Mammary epithelial cell (primary cell): ENCODE measurements at regions of chr20 and their contacts with region 1.

Region 1: DNA sequence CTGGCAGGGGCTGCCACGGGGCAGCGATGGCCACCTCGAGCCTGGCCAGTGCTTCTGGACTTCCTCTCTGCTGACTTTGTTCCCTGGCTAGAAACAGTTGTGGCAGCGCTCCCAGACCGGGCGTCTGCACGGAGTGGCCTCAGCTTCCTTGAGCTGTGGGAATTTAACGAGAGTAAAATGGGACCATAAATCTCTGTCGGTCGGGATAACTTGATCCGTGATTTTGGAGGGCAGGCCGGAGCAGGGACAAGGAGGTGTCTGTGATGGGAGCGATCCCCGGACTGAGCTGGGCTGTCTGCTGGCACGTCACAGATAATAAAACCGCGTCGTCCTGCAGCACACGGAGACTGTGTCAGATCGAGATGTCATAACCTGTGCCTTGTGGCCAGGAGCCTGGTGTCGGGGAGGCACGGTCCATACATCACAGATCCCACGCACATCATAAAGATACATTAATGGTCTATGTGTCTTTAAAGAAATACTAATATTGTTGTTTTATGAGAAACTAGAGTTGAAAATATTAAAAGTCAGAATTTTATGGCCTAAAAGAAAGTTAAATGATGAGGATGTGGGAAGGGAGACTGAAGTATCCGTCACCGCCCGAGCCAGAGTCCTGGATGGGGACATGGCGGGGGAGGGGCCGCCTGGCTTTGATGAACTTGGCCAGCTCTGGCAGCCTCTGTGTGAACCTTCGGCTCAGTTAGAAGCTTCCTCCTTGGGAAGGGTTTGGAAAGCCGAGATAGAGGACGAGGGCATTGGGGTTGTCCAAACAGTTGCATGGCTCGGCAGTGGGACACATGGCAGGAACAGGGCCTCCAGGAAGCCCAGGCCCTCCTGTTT is 6.5 kb upstream of the RBBP8NL start:
- DNase-seq: no peak
- H3K4me3 ChIP-seq: no peak overlapping the region
- H3K27ac ChIP-seq: no peak overlapping the region
- H3K4me1 ChIP-seq: no peaks in the 10 kb centered on the region
- H3K27me3 ChIP-seq: no peaks in the 10 kb centered on the region
- CTCF ChIP-seq: no peak

Region 2: GRCh38 chr20:62292108-62292507 is 141.8 kb before region 1 on chr20:
- CTCF ChIA-PET with region 1: no interaction called
- dilution Hi-C with region 1: loop called (anchors 5 kb)
- in situ Hi-C with region 1: no loop called
- intact Hi-C with region 1: no loop called
- DNase-seq: no peak
- H3K4me3 ChIP-seq: no peak overlapping the region
- H3K27ac ChIP-seq: no peak overlapping the region
- H3K4me1 ChIP-seq: no peaks in the 10 kb centered on the region
- H3K27me3 ChIP-seq: no peaks in the 10 kb centered on the region
- CTCF ChIP-seq: no peak

Region 3: GRCh38 chr20:62382306-62383198 is 51.3 kb before region 1 on chr20:
- CTCF ChIA-PET with region 1: no interaction called
- dilution Hi-C with region 1: no loop called
- in situ Hi-C with region 1: no loop called
- intact Hi-C with region 1: no loop called
- DNase-seq: peak; percentile 65
- H3K4me3 ChIP-seq: no peak overlapping the region
- H3K27ac ChIP-seq: no peak overlapping the region
- H3K4me1 ChIP-seq: peaks cover 40% of the 10 kb centered on the region
- H3K27me3 ChIP-seq: no peaks in the 10 kb centered on the region
- CTCF ChIP-seq: peak; percentile 91 to 99

Region 4: DNA sequence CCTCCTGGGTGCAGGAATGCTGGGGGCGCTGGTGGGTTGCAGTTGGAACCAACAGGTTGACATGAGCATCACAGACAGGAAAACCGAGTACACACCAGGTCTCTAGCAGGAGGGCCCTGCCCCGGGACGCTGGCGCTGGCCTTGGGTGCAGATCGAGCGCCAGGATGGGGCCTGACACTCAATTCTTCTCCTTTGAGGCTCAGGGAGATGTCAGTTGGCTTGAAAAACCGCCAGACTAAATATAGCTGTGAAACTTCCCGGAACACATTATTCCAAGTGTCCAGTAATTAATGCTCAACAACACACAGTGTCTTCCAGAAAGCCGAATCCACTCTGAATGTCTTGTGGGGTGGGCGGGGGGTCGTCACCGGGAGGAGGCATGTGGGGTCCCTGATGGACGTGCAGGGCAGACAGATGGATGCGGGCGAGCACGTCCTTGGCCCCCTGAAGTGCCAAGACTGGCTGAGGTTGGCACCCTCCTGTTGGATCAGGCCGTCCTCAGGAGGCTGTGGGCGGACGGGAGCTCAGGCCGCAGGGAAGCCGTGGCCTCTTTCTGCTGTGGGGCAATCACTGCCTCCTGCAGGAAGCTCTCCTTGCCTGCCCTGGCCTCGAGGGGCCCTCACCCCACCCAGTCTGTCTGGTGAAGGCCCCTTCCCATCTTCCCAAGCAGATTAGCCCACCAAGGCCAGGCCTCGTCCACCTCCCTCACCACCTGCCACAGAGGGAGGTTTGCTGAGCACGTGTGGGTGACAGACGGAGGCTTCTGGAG is 61.3 kb after region 1 on chr20:
- CTCF ChIA-PET with region 1: no interaction called
- dilution Hi-C with region 1: loop called (anchors 5 kb)
- in situ Hi-C with region 1: no loop called
- intact Hi-C with region 1: no loop called
- DNase-seq: no peak
- H3K4me3 ChIP-seq: no peak overlapping the region
- H3K27ac ChIP-seq: no peak overlapping the region
- H3K4me1 ChIP-seq: peaks cover 5% of the 10 kb centered on the region
- H3K27me3 ChIP-seq: no peaks in the 10 kb centered on the region
- CTCF ChIP-seq: no peak

Region 5: DNA sequence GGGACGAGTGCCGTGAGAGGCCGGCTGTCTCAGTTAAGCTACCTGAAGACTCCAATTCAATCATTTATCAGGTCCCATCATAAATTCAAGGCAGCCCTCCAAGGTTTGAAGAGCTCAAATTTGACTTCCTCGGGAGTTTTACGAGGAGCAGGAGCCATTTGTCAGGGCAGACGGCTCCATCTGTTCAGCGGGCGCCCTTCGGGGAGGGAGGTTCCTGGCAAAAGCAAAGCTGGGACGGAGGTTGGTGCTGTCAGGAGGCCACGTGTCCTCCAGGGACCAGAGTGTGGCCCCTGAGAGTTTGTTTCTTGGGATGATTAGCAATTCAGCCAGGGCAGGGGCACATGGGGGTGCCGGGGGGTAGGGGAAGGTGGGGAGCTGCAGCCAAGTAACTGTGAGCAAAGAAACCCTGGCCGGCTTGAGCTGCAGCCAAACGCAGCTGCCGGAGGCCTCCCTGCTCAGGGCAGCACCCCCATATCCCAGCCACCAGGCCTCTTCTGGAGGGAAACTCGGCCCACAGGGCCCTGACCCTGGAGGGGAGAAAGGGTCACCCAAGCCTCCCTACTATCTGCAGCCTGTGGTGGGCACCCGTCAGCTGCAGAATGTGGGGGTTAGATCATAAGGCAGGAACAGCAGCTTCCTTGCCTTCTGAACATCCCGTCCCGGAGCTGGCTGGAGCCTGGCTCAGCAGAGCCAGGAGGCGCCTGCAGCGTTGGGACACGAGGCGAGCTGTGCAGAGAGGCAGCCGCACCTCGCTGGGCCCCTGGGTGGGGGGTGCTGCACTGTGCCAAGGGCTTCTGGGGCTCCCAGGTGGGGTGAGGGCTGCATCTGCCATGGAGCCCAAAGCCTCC is 105.5 kb after region 1 on chr20:
- CTCF ChIA-PET with region 1: no interaction called
- dilution Hi-C with region 1: loop called (anchors 5 kb)
- in situ Hi-C with region 1: no loop called
- intact Hi-C with region 1: no loop called
- DNase-seq: no peak
- H3K4me3 ChIP-seq: no peak overlapping the region
- H3K27ac ChIP-seq: no peak overlapping the region
- H3K4me1 ChIP-seq: no peaks in the 10 kb centered on the region
- H3K27me3 ChIP-seq: peaks cover 15% of the 10 kb centered on the region
- CTCF ChIP-seq: no peak

Region 6: DNA sequence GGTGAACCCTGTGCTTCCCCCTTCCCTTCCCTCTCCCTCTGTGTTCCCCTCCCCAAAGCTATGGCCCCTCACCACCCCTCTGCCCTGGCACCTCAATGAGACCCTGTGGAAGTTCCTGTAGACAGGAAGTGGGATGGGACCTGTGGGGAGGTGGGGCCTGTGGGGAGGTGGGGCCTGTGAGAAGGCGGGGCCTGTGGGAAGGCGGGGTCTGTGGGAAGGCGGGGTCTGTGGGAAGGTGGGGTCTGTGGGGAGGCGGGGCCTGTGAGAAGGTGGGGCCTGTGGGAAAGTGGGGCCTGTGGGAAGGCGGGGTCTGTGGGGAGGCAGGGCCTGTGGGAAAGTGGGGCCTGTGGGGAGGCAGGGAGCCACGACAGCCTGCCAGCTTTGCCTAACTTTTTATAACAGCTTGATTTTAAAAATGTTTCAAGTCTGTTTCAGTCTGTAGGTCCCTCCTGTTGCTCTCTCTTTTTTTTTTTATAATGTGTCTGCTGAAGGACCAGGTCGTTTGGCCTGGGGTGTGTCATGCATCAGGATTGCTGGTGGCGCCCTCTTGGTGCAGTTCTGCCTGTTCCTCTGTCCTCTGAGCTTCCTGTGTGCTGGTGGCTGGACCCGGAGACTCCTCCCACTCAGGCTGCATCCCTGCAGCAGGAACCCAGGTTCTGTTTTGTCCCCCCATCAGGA is 137.9 kb after region 1 on chr20:
- CTCF ChIA-PET with region 1: no interaction called
- dilution Hi-C with region 1: loop called (anchors 5 kb)
- in situ Hi-C with region 1: no loop called
- intact Hi-C with region 1: no loop called
- DNase-seq: no peak
- H3K4me3 ChIP-seq: no peak overlapping the region
- H3K27ac ChIP-seq: no peak overlapping the region
- H3K4me1 ChIP-seq: no peaks in the 10 kb centered on the region
- H3K27me3 ChIP-seq: peaks cover 6% of the 10 kb centered on the region
- CTCF ChIP-seq: no peak

Region 7: DNA sequence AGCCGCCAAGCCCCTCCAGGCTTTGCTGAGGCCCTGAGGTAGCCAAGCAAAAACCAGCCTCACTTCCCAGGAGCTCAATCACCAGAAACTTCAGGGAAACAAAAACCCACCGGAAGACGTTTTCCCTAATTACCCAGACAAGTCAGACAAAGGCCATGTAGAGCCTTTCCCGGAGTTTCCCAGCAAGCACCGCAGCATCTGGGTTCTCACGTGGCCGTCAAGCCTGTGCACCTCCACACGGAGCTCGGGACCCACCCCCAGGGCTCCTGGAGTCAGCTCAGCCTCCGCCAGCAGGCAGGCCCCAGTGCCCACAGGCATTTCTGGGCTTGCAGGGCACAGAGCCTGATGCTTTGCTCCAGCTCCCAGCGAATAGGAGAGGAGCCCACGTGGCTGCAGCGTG is 352.3 kb after region 1 on chr20:
- CTCF ChIA-PET with region 1: no interaction called
- dilution Hi-C with region 1: loop called (anchors 5 kb)
- in situ Hi-C with region 1: no loop called
- intact Hi-C with region 1: no loop called
- DNase-seq: no peak
- H3K4me3 ChIP-seq: no peak overlapping the region
- H3K27ac ChIP-seq: no peak overlapping the region
- H3K4me1 ChIP-seq: peaks cover 1% of the 10 kb centered on the region
- H3K27me3 ChIP-seq: no peaks in the 10 kb centered on the region
- CTCF ChIP-seq: no peak